Activated naive CD4-positive, alpha-beta T cell treated with anti-CD3 and anti-CD28 coated beads for 36 hours (primary cell): ENCODE measurements at regions of chr7 and their contacts with region 1.

Region 1: DNA sequence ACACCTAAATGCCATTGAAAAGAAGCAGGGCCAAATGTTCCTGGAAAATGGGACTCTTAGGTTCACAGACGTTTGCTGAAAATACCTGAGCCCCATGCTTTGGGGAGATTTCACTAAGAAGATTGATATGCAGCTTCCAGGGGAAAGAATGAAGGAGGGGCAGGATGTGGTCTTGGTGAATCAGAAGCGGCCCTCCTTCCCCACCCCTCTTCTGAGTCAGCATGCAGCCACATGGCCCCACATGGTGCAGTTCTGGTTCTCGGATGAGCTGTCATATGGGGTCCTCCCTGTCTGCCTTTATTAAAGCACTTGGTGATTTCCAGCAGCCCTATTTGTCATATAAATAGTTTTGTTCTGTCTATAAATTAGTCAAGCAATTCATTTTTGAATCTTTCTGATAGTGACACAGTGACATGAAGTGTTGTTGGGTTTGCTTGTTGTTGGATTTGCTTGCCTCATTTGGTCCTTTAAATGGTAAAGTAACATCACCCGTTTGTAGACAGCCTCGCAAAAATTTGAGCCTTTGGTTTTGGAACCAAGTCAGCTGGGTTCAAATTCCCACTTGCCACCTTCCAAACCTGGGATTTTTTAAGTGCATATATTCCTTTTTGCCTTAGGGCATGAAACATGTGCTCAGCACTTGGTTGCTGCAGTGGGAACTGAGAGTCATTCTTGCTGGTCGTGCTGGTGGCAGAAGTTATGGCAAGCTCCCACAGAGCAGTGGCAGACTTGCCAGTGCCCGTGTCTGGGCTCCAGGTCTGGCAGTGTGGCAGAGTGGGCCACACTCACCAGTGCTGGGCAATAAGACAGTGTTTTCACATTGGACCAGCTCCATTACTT is 68.1 kb upstream of the CDK6 start:
- DNase-seq: peak; percentile 96
- H3K4me3 Mint-ChIP-seq: peak overlapping the region; percentile 18
- H3K27ac Mint-ChIP-seq: peak overlapping the region; percentile 84
- H3K4me1 Mint-ChIP-seq: peaks cover 26% of the 10 kb centered on the region
- H3K27me3 Mint-ChIP-seq: peaks cover 5% of the 10 kb centered on the region

Region 2: DNA sequence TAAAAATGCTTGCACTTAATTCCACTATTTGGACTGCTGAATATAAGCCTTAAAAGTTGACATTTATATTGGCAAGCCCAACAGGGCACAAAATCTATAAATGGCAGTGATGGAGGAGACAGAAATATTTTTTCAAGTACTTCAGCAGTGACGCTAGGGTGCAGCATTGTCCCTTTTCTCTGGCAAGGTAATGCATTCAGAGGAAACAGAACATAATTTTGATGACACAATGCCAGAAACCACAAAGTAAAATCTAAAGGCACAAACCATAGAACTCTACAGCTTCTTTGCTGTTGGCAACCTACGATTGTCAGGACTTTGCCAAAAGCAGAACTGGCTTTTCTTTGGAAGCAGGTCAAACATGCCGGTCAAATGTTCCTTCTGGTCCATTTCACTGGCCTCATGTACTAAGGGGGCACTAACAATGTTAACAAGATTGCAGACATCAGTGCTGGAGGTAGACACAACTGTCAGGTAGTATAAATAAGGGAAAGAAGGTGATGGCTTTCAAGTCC is 283.4 kb before region 1 on chr7:
- CTCF ChIA-PET with region 1: no interaction called
- intact Hi-C with region 1: loop called (anchors 1 kb)
- DNase-seq: peak; percentile 93
- H3K4me3 Mint-ChIP-seq: peak overlapping the region; percentile 4
- H3K27ac Mint-ChIP-seq: peak overlapping the region; percentile 80
- H3K4me1 Mint-ChIP-seq: peaks cover 46% of the 10 kb centered on the region
- H3K27me3 Mint-ChIP-seq: no peaks in the 10 kb centered on the region

Region 3: DNA sequence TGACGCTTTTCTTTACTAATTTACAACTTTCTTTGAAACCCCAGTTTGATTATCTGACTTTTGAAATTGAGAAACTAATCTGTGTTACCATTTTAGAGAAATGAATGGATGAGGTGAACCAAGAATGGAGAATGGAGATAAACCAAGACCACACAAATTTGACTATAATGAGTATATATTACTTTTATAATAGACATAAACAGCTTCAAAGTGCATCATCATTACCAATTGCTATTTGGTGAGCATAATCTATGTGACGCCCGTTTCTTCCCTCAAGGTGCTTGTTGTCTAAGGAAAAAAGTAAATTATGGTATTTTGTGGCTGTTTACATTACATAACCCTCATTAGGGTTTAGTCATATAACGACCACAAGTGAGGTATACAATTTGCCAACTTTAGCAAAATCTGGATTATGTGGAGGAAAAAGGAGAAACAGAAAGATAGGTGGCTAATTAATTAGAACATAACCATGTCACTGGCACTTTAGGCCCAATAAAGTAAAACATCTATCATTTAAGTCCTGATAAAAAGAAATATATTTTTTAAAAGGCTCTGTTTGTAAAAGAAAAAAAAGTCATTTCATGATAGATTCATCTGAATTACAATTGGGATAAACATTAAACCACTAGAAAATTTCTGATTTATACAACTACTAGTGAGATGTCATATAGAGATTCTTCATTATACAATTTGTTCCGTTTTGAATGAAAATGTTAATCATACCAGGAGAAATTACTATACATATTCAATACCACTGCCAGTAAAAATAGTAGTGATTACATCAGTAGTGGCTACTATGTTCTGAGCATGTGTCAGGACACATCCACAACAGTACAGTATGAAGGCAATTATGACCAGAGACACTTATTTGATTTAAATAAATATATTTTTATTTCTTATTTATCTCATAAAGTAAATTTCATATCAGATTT is 196.1 kb before region 1 on chr7:
- CTCF ChIA-PET with region 1: interaction called, 4 read pairs
- intact Hi-C with region 1: loop called (anchors 1 kb)
- DNase-seq: no peak
- H3K4me3 Mint-ChIP-seq: no peak overlapping the region
- H3K27ac Mint-ChIP-seq: peak overlapping the region; percentile 89
- H3K4me1 Mint-ChIP-seq: peaks cover 52% of the 10 kb centered on the region
- H3K27me3 Mint-ChIP-seq: no peaks in the 10 kb centered on the region

Region 4: DNA sequence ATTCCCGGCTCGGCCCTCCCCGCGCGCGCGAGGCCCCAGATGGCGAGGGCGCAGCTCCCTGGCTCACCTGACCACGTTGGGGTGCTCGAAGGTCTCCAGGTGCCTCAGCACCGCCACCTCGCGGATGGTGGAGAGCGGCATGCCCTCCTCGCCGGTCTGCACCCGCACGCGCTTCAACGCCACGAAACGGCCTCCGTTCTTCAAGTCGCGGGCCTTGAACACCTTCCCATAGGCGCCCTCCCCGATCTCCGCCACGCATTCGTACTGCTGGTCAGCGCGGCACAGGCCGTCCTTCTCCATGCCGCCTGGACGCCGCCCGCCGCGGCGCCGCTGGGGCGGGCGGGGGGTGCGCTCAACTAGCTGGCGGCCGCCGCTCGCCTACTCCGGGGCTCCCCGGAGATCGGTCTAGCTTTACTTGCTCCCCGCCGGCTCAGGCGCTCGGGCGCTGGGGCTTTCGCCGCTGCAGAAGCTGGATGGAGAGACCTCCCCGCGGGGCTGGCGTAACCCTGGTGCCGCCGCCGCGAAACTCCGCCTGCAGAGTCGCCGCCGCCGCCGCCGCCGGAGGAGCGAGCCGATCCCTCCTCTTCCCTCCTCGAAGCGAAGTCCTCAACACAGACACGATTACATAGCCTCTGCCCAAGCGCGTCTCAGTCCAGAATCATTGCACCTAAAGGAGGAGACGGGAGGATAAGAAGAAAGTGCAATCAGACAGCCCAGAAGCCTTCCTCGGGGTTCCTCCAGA is 71.3 kb before region 1 on chr7:
- CTCF ChIA-PET with region 1: interaction called, 6 read pairs
- intact Hi-C with region 1: loop called (anchors 1 kb)
- DNase-seq: peak; percentile 94
- H3K4me3 Mint-ChIP-seq: peak overlapping the region; percentile 89
- H3K27ac Mint-ChIP-seq: peak overlapping the region; percentile 98
- H3K4me1 Mint-ChIP-seq: peaks cover 36% of the 10 kb centered on the region
- H3K27me3 Mint-ChIP-seq: peaks cover 5% of the 10 kb centered on the region

Region 5: DNA sequence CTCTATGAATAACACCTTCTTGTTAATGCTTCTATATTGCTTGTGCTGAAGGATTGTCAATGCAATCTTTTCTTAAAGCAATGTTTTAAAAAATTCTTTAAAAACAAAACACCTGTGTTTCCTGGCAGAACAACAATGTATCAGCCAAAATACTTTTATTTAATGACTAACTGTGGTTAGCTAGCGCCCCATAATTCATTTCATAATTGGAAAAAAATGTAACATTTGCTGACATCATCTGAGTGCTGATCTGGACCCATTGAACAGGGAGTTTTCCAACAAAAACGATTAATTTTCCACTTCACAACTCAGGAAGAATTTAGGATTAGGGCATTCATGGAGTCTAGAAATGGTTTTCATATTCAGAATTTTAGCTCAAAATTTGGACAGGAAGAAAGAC is 69.5 kb after region 1 on chr7:
- CTCF ChIA-PET with region 1: no interaction called
- intact Hi-C with region 1: loop called (anchors 1 kb)
- DNase-seq: no peak
- H3K4me3 Mint-ChIP-seq: no peak overlapping the region
- H3K27ac Mint-ChIP-seq: no peak overlapping the region
- H3K4me1 Mint-ChIP-seq: peaks cover 17% of the 10 kb centered on the region
- H3K27me3 Mint-ChIP-seq: peaks cover 10% of the 10 kb centered on the region

Region 6: GRCh38 chr7:93231799-93232672 is 327.5 kb after region 1 on chr7 and contains the start of gene VPS50:
- CTCF ChIA-PET with region 1: no interaction called
- intact Hi-C with region 1: loop called (anchors 1 kb)
- DNase-seq: peak; percentile 96
- H3K4me3 Mint-ChIP-seq: peak within 1 kb of the TSS; percentile 96
- H3K27ac Mint-ChIP-seq: peak within 1 kb of the TSS; percentile 83
- H3K4me1 Mint-ChIP-seq: peaks cover 10% of the 10 kb centered on the region
- H3K27me3 Mint-ChIP-seq: no peaks in the 10 kb centered on the region
- total RNA-seq, gene VPS50: 15.0 to 15.8 TPM